K562 (cell line): ENCODE measurements at regions of chr17 and their contacts with region 1.

Region 1: DNA sequence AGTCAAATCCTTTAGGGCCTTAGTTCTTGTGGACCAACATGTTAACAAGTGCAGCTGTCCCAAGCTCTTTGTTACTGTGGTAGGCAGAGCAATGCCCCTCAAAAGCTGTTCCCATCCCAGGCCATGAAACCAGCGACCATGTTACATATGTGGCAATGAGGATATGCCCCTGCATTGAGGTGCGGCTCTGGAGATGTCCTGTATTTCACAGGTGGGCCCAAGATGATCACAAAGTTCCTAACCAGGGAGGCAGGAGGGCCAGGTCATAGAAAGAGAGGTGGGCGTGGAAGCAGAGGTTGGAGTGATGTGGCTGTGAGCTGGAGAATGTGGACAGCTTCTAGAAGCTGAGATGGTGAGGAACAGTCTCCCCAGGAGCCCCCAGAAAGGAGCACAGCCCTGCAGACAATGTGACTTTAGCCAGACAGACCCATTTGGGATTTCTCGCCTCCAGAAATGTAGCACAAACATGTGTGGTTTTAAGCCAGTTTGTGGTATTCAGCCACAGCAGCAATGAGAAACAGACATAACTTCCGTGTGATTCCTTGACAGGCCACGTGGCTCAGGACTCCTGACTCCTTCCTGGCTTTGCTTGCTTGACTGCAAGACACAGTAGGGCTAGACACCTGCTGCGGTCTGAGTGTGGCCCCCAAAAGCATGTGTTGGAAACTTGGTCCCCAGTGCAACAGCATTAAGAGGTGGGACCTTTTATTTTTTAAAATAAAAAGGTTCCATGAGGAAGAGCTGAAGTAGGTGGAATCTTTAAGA is 778.3 kb downstream of the KCNJ18 start:
- DNase-seq: no peak
- ATAC-seq: no peak
- H3K4me3 ChIP-seq: no peak overlapping the region
- H3K27ac ChIP-seq: no peak overlapping the region
- H3K4me1 ChIP-seq: no peaks in the 10 kb centered on the region
- H3K27me3 ChIP-seq: no peaks in the 10 kb centered on the region
- CTCF ChIP-seq: no peak
- EP300 ChIP-seq: no peak
- POLR2A ChIP-seq: no peak
- RAD21 ChIP-seq: no peak

Region 2: DNA sequence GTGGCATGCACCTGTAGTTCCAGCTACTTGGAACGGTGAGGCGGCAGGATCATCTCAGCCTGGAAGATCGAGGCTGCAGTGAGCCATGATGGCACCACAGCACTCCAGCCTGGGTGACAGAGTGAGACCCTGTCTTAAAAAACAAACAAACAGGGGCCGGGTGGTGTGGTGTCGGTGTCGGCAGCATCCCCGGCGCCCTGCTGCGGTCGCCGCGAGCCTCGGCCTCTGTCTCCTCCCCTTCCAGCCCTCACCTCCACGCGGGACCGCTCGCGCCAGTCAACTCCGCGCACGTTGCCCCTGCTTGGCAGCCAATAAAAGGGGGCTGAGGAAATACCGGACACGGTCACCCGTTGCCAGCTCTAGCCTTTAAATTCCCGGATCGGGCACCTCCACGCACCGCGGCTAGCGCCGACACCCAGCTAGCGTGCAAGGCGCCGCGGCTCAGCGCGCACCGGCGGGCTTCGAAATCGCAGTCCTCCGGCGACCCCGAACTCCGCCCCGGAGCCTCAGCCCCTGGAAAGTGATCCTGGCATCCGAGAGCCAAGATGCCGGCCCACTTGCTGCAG is 1686.4 kb before region 1 on chr17:
- CTCF ChIA-PET with region 1: no interaction called
- POLR2A ChIA-PET with region 1: no interaction called
- in situ Hi-C with region 1: loop called (anchors 10 kb)
- intact Hi-C with region 1: no loop called
- DNase-seq: no peak
- ATAC-seq: no peak; the same call in 2 of the 3 replicates
- H3K4me3 ChIP-seq: no peak overlapping the region
- H3K27ac ChIP-seq: no peak overlapping the region
- H3K4me1 ChIP-seq: peaks cover 0 to 6% of the 10 kb centered on the region in 2 experiments; a peak in 2 of 5 replicates
- H3K27me3 ChIP-seq: peaks cover 0 to 12% of the 10 kb centered on the region in 2 experiments; a peak in 1 of 5 replicates
- CTCF ChIP-seq: no peak
- EP300 ChIP-seq: no peak
- POLR2A ChIP-seq: no peak
- RAD21 ChIP-seq: no peak